ENCODE measurements at regions of chr2 and their contacts with region 1.

Region 1: GRCh38 chr2:68196120-68196716 is 38.5 kb downstream of the PNO1 start:
- DNase-seq: no peak
- H3K4me3 ChIP-seq: no peak overlapping the region
- H3K27ac ChIP-seq: no peak overlapping the region
- H3K4me1 ChIP-seq: peaks cover 2 to 21% of the 10 kb centered on the region in 2 experiments; a peak in 2 of 4 replicates
- H3K27me3 ChIP-seq: no peaks in the 10 kb centered on the region
- CTCF ChIP-seq: peak; percentile 67
- EP300 ChIP-seq: no peak
- RAD21 ChIP-seq: peak; percentile 53

Region 2: DNA sequence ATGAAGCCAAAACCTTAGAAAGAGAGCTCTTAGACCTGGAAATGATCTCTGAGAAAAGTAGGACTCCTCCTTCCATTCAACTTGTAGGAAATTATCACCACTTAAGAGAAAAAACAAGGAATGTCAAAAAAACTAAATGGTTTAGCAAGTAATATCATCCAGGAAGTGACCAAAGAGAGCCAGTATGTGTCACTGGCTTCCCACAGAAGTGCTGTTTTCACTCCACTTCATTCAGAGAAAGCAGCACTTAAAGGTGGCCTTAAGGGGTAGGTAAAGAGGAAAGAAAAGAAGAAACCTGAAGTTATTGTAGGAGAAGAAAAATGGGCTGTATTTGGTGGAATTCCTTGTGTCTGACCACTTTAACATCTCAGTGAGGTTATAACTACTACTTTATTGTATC is 1213.5 kb before region 1 on chr2:
- CTCF ChIA-PET with region 1: no interaction called
- POLR2A ChIA-PET with region 1: no interaction called
- DNase-seq: no peak
- H3K4me3 ChIP-seq: no peak overlapping the region
- H3K27ac ChIP-seq: no peak overlapping the region
- H3K4me1 ChIP-seq: peaks cover 0 to 2% of the 10 kb centered on the region in 2 experiments; a peak in 1 of 4 replicates
- H3K27me3 ChIP-seq: no peaks in the 10 kb centered on the region
- CTCF ChIP-seq: no peak
- EP300 ChIP-seq: no peak
- RAD21 ChIP-seq: no peak

Region 3: GRCh38 chr2:68185541-68186164 is 10.6 kb before region 1 on chr2:
- CTCF ChIA-PET with region 1: interaction called, 14 read pairs
- POLR2A ChIA-PET with region 1: no interaction called
- DNase-seq: peak; percentile 44
- H3K4me3 ChIP-seq: peak overlapping the region in 1 of 2 experiments; percentile 17; a peak in 1 of 4 replicates
- H3K27ac ChIP-seq: no peak overlapping the region
- H3K4me1 ChIP-seq: no peaks in the 10 kb centered on the region; a peak in 1 of 4 replicates
- H3K27me3 ChIP-seq: no peaks in the 10 kb centered on the region
- CTCF ChIP-seq: peak; percentile 75
- EP300 ChIP-seq: no peak
- RAD21 ChIP-seq: peak; percentile 36; the same call in 1 of the 2 replicates

Region 4: DNA sequence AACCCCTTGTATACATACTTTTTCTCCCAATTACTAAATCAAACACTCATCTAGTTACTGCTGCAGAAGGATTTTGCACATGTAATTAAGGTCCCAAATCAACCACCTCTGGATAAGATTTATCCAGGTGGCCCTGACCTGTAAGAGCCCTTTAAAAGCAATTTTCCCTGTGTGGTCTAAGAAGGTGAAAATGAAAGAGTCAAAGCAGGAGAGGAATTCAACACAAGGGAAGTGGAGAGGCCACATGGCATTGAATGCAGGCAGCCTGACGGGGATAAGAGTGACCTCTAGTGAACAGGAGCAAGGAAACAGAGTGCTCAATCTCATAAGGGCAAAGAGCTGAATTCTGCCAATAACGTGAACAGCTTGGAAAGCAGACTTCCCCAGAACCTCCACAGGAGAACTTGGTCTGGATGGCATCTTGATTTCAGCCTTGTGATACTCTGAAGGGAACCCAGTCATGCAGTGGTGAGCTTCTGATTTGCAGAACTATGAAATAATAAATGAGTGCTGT is 29.0 kb after region 1 on chr2:
- CTCF ChIA-PET with region 1: interaction called, 11 read pairs
- POLR2A ChIA-PET with region 1: no interaction called
- DNase-seq: peak; percentile 24
- H3K4me3 ChIP-seq: no peak overlapping the region
- H3K27ac ChIP-seq: peak overlapping the region in 1 of 2 experiments; percentile 23; a peak in 1 of 4 replicates
- H3K4me1 ChIP-seq: peaks cover 19 to 24% of the 10 kb centered on the region in 2 experiments; a peak in 3 of 4 replicates
- H3K27me3 ChIP-seq: no peaks in the 10 kb centered on the region
- CTCF ChIP-seq: peak; percentile 35
- EP300 ChIP-seq: no peak
- RAD21 ChIP-seq: peak; percentile 72

Region 5: DNA sequence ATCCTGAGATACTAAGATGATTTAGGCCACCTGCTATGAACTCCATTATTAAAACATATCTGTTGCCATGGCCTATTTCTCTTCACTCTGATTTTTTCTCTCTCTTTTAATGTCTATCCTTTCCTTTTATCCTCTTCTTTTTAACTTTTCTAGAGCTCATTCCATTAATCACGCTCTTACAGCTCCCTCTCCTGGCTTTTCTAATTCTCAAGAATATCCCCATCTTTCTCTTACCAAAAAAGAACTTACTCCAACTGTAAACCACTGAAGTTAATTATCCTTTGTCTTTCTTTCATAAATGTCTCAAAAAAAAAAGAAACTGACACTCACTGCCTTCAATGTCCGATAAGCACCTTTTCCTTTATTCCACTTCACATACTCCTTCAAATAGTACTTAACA is 48.2 kb after region 1 on chr2:
- CTCF ChIA-PET with region 1: interaction called, 12 read pairs
- POLR2A ChIA-PET with region 1: no interaction called
- DNase-seq: no peak
- H3K4me3 ChIP-seq: no peak overlapping the region
- H3K27ac ChIP-seq: peak overlapping the region; percentile 1 to 7; a peak in 2 of 4 replicates
- H3K4me1 ChIP-seq: peaks cover 10 to 43% of the 10 kb centered on the region in 2 experiments
- H3K27me3 ChIP-seq: no peaks in the 10 kb centered on the region
- CTCF ChIP-seq: peak; percentile 44
- EP300 ChIP-seq: no peak
- RAD21 ChIP-seq: peak; percentile 47; the same call in 1 of the 2 replicates

Region 6: GRCh38 chr2:68251187-68251854 is 55.1 kb after region 1 on chr2:
- CTCF ChIA-PET with region 1: interaction called, 16 read pairs
- POLR2A ChIA-PET with region 1: no interaction called
- DNase-seq: peak; percentile 65
- H3K4me3 ChIP-seq: peak overlapping the region; percentile 88 to 99
- H3K27ac ChIP-seq: peak overlapping the region; percentile 90 to 96
- H3K4me1 ChIP-seq: peaks cover 18 to 40% of the 10 kb centered on the region in 2 experiments
- H3K27me3 ChIP-seq: no peaks in the 10 kb centered on the region
- CTCF ChIP-seq: peak; percentile 71
- EP300 ChIP-seq: no peak
- RAD21 ChIP-seq: peak; percentile 71

Region 7: DNA sequence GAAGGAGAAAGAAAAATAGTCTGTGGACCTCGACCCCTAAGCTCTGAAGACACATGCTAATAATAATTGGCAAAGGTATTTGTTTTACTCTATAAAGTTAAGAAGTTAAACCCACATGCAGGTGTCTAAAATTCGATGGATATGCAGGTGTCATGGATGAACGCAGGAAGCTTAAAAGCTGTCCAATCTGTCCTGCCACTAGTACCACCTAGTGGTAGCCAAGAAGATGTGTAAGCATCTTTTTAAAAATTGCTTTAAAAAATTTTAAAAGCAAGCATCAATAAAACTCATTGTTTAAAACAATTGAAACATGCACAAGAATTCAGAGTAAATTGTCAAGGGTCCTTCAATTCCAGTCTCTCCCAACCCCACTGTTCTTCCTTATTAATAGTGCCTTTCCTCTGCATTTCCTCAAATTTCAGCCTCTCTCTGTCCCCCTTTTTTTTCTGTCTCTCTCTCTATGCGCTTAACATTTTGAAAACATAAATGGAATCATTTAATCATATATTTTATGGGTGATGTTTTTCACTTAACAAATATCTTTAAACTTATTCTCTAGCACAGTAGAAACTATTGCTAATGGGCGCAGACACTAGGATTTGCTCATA is 86.7 kb after region 1 on chr2:
- CTCF ChIA-PET with region 1: interaction called, 15 read pairs
- POLR2A ChIA-PET with region 1: no interaction called
- DNase-seq: peak; percentile 69
- H3K4me3 ChIP-seq: no peak overlapping the region
- H3K27ac ChIP-seq: no peak overlapping the region
- H3K4me1 ChIP-seq: peaks cover 0 to 4% of the 10 kb centered on the region in 2 experiments; a peak in 2 of 4 replicates
- H3K27me3 ChIP-seq: no peaks in the 10 kb centered on the region
- CTCF ChIP-seq: peak; percentile 89
- EP300 ChIP-seq: no peak
- RAD21 ChIP-seq: peak; percentile 83

Region 8: GRCh38 chr2:68537809-68538208 is 341.6 kb after region 1 on chr2:
- CTCF ChIA-PET with region 1: no interaction called
- POLR2A ChIA-PET with region 1: no interaction called
- DNase-seq: no peak
- H3K4me3 ChIP-seq: no peak overlapping the region
- H3K27ac ChIP-seq: no peak overlapping the region
- H3K4me1 ChIP-seq: no peaks in the 10 kb centered on the region; a peak in 1 of 4 replicates
- H3K27me3 ChIP-seq: no peaks in the 10 kb centered on the region
- CTCF ChIP-seq: no peak
- EP300 ChIP-seq: no peak
- RAD21 ChIP-seq: no peak